AG04450 (cell line): ENCODE measurements at regions of chr4 and their contacts with region 1.

Region 1: DNA sequence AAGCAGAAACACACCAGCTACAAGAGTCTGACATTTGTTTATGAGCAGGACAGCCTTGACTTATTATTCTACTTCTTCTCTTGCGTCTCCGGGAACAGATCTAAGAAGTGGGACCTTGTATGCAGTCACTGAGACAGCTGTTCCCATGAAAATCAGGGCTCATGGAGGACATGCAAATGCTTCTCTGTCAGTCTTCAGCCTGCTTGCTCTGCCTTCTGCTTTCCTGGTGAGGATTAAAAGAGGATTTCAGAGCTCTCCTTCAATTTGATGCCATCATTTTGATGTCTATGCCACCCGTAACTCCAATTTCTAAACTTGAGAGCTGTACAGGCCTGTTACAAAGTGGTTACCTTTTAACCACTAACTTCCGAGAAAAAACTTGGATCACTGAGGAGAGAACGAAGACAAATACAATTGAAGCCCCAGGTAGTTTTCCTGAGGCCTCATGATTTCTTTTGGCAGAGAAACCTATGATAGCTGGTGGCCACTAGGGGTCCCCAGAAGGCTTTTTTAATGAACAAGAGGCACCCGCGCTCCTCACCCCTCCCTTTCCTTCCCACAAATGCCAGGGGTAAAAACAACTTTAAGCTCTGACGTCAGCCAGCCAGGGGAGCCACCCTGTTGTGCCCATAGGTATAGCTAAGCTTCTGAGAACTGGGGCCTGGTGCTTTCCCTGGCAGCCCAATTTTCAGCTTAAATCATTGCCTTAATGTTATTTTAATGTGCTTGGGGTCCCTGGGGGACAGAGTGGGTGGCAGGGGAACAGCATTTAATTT is 97.0 kb downstream of the DDIT4L start:
- DNase-seq: peak; percentile 56
- H3K4me3 ChIP-seq: no peak overlapping the region
- H3K27ac ChIP-seq: no peak overlapping the region
- H3K27me3 ChIP-seq: peaks cover 4% of the 10 kb centered on the region
- CTCF ChIP-seq: peak; percentile 85

Region 2: GRCh38 chr4:99998062-99998867 is 95.0 kb before region 1 on chr4:
- CTCF ChIA-PET with region 1: interaction called, 277 read pairs
- POLR2A ChIA-PET with region 1: interaction called, 3 read pairs
- DNase-seq: no peak
- H3K4me3 ChIP-seq: no peak overlapping the region
- H3K27ac ChIP-seq: no peak overlapping the region
- H3K27me3 ChIP-seq: no peaks in the 10 kb centered on the region
- CTCF ChIP-seq: peak; percentile 55

Region 3: GRCh38 chr4:100017637-100018310 is 75.5 kb before region 1 on chr4:
- CTCF ChIA-PET with region 1: interaction called, 40 read pairs
- POLR2A ChIA-PET with region 1: no interaction called
- DNase-seq: no peak
- H3K4me3 ChIP-seq: no peak overlapping the region
- H3K27ac ChIP-seq: no peak overlapping the region
- H3K27me3 ChIP-seq: no peaks in the 10 kb centered on the region
- CTCF ChIP-seq: no peak

Region 4: GRCh38 chr4:100060765-100061416 is 32.4 kb before region 1 on chr4:
- CTCF ChIA-PET with region 1: interaction called, 32 read pairs
- POLR2A ChIA-PET with region 1: no interaction called
- DNase-seq: no peak
- H3K4me3 ChIP-seq: no peak overlapping the region
- H3K27ac ChIP-seq: no peak overlapping the region
- H3K27me3 ChIP-seq: no peaks in the 10 kb centered on the region
- CTCF ChIP-seq: no peak

Region 5: DNA sequence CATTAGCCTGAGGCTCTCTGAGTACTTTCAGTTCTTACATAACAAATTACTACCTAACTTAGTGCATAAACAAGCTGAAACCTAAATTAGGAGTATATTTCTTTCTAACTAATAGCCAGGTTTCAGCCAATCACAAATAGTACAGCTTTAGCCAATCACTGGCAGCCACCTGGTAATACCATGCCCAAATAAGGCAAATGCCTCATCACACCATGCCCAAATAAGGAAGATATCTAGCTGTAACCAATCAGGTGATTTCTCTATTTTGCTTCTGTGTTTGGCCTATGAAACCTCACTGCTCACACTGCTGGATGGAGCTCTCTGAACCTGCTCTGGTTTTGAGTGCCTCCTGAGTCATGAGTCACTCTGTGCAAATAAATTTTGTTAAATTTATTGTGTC is 16.5 kb before region 1 on chr4:
- CTCF ChIA-PET with region 1: interaction called, 69 read pairs
- POLR2A ChIA-PET with region 1: no interaction called
- DNase-seq: no peak
- H3K4me3 ChIP-seq: no peak overlapping the region
- H3K27ac ChIP-seq: no peak overlapping the region
- H3K27me3 ChIP-seq: no peaks in the 10 kb centered on the region
- CTCF ChIP-seq: no peak

Region 6: DNA sequence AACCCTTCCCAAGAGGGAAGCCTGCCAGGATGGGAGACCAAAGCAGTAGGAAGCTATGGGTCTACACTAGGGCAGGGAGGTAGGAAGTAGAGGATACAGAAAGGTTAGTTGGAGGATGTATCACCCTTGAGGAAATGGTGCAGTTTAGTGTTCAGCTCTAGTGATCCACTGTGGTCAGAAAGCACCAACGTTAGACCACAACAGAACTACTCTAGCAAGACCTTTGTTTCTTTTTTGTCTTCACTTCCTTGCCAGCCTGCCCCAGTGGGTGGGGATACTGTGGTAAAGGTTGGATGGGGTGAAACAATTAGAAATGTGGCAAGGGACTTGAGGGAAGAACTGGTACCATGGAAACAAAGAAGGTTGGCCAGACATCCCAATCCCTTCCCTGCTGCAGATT is 13.7 kb after region 1 on chr4:
- CTCF ChIA-PET with region 1: interaction called, 35 read pairs
- POLR2A ChIA-PET with region 1: no interaction called
- DNase-seq: no peak
- H3K4me3 ChIP-seq: no peak overlapping the region
- H3K27ac ChIP-seq: no peak overlapping the region
- H3K27me3 ChIP-seq: no peaks in the 10 kb centered on the region
- CTCF ChIP-seq: no peak

Region 7: DNA sequence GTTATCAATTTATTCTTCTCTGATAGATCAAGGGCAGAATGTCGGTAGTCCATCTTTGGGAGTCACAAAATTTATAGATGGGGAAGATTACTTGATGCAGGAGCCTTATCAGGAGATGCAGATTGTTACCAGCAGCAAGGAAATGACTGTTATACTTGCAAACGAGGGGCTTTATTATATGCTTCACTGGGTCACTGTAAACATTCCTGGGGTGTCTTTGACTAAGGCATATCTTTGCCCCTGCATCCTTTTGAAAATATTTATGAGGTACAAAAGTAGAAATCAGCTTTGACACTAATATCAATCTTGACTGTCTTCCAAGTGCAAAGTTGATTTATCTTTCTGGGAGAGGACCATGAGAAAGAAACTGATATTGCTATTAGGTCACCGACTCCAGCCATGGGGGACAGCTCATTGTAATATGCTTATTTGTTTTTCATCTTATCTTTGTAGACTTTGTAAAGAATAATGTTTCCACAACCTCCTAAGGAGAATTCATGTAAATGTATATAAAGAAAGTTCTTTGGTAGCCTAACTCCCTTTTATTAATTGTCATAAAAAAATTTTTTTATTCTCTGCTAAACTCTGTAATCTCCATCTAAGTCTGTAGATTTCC is 601.9 kb after region 1 on chr4:
- CTCF ChIA-PET with region 1: no interaction called
- POLR2A ChIA-PET with region 1: no interaction called
- DNase-seq: no peak
- H3K4me3 ChIP-seq: no peak overlapping the region
- H3K27ac ChIP-seq: no peak overlapping the region
- H3K27me3 ChIP-seq: no peaks in the 10 kb centered on the region
- CTCF ChIP-seq: no peak

Region 8: DNA sequence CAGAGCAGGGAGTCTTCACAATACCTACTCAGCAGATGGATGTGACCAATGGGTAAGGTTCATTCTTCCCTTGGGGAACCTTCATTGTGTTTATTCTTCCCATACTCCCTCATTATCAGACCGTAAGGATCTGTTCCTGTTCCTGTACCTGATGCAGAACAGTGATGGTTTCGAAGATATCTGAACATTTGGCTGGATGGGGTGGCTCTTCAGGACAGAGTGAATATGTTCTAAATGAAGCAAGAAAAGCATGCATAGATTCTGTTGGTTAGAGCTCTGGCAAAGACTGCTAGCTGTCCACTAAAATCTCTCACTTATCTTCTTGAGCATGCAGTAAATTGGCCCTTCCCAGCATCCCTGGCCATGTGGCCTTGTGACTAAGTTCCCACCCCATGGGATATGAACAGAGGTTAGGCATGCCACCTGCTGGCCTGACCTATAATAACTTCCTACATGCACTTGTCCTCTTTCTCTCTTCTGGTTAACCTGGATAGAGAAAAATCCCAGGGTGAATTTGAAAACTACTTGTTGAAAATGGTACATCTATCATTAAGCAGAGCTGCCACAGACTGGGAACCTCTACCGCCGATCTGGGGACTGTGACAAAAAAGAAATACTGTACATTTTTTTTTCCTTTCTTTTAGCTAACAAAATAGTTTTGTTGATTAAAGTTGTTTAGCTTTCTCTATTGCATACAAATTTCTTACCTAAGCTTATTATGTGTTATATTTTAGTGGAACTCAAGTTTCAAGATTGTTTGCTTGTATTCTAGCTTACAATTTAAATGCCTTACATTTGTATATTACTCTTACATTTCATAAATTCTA is 1637.2 kb after region 1 on chr4:
- CTCF ChIA-PET with region 1: interaction called, 19 read pairs
- POLR2A ChIA-PET with region 1: no interaction called
- DNase-seq: peak; percentile 29
- H3K4me3 ChIP-seq: no peak overlapping the region
- H3K27ac ChIP-seq: no peak overlapping the region
- H3K27me3 ChIP-seq: no peaks in the 10 kb centered on the region
- CTCF ChIP-seq: peak; percentile 74